Activated CD4-positive, alpha-beta memory T cell treated with anti-CD3 and anti-CD28 coated beads, Interleukin-2, amount 10 ng/mL, durations not matched to agents 7 days and 5 days (primary cell): ENCODE measurements at regions of chr11 and their contacts with region 1.

Region 1: DNA sequence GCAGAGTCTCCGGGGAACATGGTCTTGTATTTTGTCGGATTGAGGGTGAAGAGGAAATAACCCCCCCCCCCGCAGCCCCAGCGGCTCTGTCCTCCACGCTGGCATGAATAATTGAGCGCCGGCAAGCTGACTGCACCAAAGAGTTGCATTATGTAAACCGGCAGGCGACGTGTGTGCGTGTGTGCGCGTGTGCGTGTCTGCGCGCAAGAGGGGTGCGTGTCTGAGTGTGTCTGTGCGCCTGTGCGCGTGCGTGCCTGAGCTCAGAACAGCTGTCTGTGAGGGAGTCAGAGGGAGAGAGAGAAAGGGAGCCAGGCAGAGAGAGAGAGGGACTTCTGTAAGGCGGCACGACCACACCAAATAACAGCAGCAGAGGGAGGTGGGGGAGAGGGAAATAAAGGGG is 94.4 kb downstream of the SCN3B start:
- DNase-seq: no peak
- H3K4me3 Mint-ChIP-seq: no peak overlapping the region
- H3K27ac Mint-ChIP-seq: no peak overlapping the region
- H3K4me1 Mint-ChIP-seq: peaks cover 16% of the 10 kb centered on the region
- H3K27me3 Mint-ChIP-seq: no peaks in the 10 kb centered on the region

Region 2: GRCh38 chr11:123511037-123511870 is 48.8 kb before region 1 on chr11:
- CTCF ChIA-PET with region 1: interaction called, 12 read pairs
- POLR2A ChIA-PET with region 1: no interaction called
- DNase-seq: peak; percentile 78
- H3K4me3 Mint-ChIP-seq: no peak overlapping the region
- H3K27ac Mint-ChIP-seq: peak overlapping the region; percentile 23
- H3K4me1 Mint-ChIP-seq: peaks cover 48% of the 10 kb centered on the region
- H3K27me3 Mint-ChIP-seq: no peaks in the 10 kb centered on the region

Region 3: DNA sequence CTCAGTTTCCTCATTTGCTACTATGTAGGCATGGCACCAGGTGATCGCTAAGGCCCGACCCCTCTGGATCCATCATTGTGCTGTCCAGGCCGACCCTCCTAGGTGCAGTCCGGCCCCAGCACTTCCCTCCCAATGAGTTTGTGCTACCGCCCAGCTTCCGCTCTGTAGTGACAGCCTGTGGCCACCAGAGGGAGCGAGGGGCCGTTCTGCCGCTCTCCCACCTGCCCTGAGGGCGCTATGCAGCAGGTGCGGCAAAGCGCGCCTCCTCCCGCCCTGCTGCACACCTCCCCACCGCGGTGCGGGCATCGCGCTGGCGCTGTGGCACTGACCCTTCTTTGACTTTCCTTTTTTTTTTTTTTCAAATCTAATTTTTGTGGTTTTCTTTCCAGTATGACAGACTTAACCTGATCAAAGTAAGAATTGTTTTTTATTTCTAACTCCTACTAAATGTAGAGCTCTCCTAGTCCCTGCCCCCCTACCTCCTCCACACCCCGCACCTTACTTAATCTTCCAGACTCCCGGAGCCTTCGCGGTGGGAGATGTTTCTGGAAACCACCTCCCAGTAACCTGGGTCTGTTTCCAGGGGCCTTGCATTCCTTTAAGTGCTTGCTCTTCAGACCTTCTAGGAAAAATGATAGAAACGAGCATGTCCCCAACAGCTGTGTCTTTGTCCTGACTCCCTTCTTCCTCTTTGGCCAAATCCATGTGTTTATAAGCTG is 20.7 kb after region 1 on chr11:
- CTCF ChIA-PET with region 1: interaction called, 13 read pairs
- POLR2A ChIA-PET with region 1: no interaction called
- DNase-seq: peak; percentile 71
- H3K4me3 Mint-ChIP-seq: no peak overlapping the region
- H3K27ac Mint-ChIP-seq: no peak overlapping the region
- H3K4me1 Mint-ChIP-seq: peaks cover 32% of the 10 kb centered on the region
- H3K27me3 Mint-ChIP-seq: no peaks in the 10 kb centered on the region